ENCODE measurements at regions of chr4 and their contacts with region 1.

Region 1: GRCh38 chr4:89294573-89295269 is 12.9 kb downstream of the GPRIN3 start:
- DNase-seq: no peak
- ATAC-seq: peak; percentile 73
- H3K4me3 Mint-ChIP-seq: peak overlapping the region; percentile 70
- H3K27ac Mint-ChIP-seq: peak overlapping the region; percentile 90
- H3K4me1 Mint-ChIP-seq: peaks cover 72% of the 10 kb centered on the region
- H3K27me3 Mint-ChIP-seq: no peaks in the 10 kb centered on the region

Region 2: DNA sequence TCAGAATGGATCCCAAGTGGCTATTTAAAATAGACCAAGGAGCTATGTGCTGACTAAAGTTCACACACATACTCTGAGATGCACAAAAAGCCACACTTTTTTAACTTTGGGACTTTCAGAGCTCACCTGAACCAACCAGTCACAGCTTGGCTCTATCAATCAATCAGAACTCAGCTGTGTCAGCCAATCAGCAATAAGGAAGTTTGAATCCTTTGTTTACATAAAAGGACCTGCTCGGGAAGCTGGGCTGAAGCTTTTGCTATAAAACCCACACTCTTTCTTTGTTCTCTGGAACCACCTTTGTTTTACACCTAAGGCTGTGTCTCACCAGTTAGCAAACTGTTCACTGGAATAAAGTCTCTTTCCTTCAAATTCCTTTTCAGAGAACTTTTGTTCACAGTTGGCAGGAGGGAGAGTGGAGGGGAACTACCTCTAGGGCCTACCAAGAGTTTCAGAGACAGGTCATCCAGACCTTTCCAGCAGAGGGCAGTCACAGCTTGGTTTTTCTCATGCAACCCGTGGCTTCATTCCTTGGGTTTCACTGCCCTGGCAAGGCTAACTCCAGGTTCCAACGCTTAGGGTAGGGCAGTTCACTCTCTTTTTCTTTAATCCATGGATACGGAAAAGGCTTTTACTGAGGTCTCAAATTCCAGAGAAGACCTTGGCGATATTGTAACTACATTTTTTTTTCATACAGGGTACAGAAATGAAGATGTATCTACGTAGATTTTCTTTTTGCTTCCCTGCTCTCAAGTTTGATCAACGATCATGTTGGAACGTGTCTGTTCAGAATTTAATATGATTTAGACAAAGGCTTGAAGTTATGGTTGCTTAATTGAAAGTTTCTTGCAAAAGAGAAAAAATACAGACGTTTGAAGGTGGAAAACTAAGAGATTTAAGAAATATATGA is 67.8 kb before region 1 on chr4:
- POLR2A ChIA-PET with region 1: no interaction called
- DNase-seq: peak; percentile 62
- ATAC-seq: peak; percentile 91
- H3K4me3 Mint-ChIP-seq: peak overlapping the region; percentile 11
- H3K27ac Mint-ChIP-seq: no peak overlapping the region
- H3K4me1 Mint-ChIP-seq: peaks cover 8% of the 10 kb centered on the region
- H3K27me3 Mint-ChIP-seq: peaks cover 3% of the 10 kb centered on the region

Region 3: DNA sequence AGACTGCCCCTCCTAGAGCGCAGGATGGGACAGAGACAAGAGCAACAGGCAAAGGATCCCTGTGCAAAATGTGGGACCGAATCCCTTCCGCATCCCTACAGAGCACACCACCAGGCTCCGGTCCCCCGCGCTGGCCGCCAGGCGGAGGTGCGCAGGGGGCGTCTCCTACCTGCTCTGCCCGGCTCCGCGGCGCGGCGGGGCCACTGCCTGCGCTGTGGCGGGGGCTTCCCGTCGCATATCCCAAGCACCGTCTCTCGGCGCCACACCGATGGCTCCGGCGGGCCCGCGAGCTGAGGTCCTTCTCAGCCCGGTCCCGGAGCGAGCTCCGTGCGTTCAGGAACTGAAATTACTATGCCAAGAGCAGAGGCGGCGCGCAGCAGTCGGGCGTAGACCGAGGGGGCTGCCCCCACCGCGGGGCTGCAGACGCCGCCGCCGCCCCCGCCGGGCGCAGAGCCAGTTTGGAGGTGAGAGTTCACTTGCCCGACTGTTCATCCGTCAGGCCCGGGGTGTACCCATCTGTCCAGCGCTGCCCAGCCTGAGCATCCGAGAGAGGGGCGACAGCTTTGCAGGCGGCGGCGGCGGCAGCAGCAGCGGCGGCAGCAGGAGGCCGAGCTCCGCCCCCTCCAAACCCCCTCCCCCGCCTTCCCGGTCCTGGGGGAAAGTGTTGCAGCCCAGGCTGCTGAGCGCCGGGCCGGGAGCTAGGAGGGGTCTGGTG is 12.9 kb after region 1 on chr4 and contains the start of gene GPRIN3:
- POLR2A ChIA-PET with region 1: interaction called, 26 read pairs
- DNase-seq: peak; percentile 77
- ATAC-seq: peak; percentile 68
- H3K4me3 Mint-ChIP-seq: peak within 1 kb of the TSS; percentile 97
- H3K27ac Mint-ChIP-seq: peak within 1 kb of the TSS; percentile 87
- H3K4me1 Mint-ChIP-seq: peaks cover 38% of the 10 kb centered on the region
- H3K27me3 Mint-ChIP-seq: no peaks in the 10 kb centered on the region
- total RNA-seq, gene GPRIN3: 23.9 to 25.5 TPM

Region 4: GRCh38 chr4:89316931-89317366 is 22.2 kb after region 1 on chr4:
- POLR2A ChIA-PET with region 1: interaction called, 22 read pairs
- DNase-seq: no peak
- ATAC-seq: peak; percentile 90
- H3K4me3 Mint-ChIP-seq: peak overlapping the region; percentile 51
- H3K27ac Mint-ChIP-seq: peak overlapping the region; percentile 87
- H3K4me1 Mint-ChIP-seq: peaks cover 35% of the 10 kb centered on the region
- H3K27me3 Mint-ChIP-seq: no peaks in the 10 kb centered on the region

Measured in activated naive CD8-positive, alpha-beta T cell treated with anti-CD3 and anti-CD28 coated beads, Interleukin-2, amount 10 ng/mL, durations not matched to agents 7 days and 5 days (primary cell).